Activated CD4-positive, alpha-beta T cell treated with anti-CD3 and anti-CD28 coated beads, Interleukin-2, amount 10 ng/mL, durations not matched to agents 7 days and 5 days (primary cell): ENCODE measurements at regions of chr12 and their contacts with region 1.

Region 1: GRCh38 chr12:94101738-94102660 is 46.4 kb upstream of the PLXNC1 start:
- DNase-seq: peak; percentile 91
- H3K4me3 Mint-ChIP-seq: peak overlapping the region; percentile 78
- H3K27ac Mint-ChIP-seq: peak overlapping the region; percentile 91
- H3K4me1 Mint-ChIP-seq: peaks cover 38% of the 10 kb centered on the region
- H3K27me3 Mint-ChIP-seq: peaks cover 12% of the 10 kb centered on the region

Region 2: DNA sequence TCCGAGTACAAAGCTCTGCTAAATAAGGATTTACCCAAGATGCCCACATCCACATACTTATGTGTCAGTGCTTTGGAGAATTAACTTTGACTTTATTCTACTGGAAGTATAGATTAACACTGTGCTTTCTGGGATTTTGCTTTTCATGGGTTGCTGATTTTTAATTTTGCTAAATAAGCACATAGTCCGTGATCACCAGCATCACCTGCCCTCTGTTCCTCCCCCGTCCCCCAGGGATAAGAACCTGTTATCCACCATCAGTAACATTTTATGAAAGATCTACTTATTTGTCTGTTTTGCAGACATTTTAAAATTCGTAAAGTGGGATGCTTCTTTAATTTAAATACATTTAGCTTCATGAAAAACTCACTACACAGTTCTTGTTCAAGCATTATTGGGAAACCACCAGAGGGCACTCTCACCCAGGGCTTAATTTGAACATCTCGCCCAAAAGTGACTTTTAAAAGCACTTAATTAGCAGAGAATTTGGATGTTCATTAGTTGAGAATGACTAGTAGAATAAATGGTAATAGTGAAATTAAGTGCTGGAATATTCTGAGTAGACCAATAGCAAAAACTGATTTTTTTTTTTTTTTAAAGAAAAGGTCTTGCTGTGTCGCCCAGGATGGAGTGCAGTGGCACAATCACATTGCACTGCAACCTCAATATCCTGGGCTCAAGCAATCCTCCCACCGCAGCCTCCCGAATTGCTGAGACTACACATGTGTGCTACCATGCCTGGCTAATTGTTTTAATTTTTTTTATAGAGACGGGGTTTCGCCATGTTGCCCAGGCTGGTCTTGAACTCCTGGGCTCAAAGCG is 599.0 kb before region 1 on chr12:
- CTCF ChIA-PET with region 1: interaction called, 61 read pairs
- POLR2A ChIA-PET with region 1: interaction called, 6 read pairs
- DNase-seq: peak; percentile 77
- H3K4me3 Mint-ChIP-seq: no peak overlapping the region
- H3K27ac Mint-ChIP-seq: no peak overlapping the region
- H3K4me1 Mint-ChIP-seq: peaks cover 24% of the 10 kb centered on the region
- H3K27me3 Mint-ChIP-seq: no peaks in the 10 kb centered on the region

Region 3: GRCh38 chr12:93526786-93527428 is 575.1 kb before region 1 on chr12:
- CTCF ChIA-PET with region 1: interaction called, 11 read pairs
- POLR2A ChIA-PET with region 1: no interaction called
- DNase-seq: no peak
- H3K4me3 Mint-ChIP-seq: no peak overlapping the region
- H3K27ac Mint-ChIP-seq: no peak overlapping the region
- H3K4me1 Mint-ChIP-seq: peaks cover 13% of the 10 kb centered on the region
- H3K27me3 Mint-ChIP-seq: peaks cover 19% of the 10 kb centered on the region

Region 4: GRCh38 chr12:93569656-93570551 is 532.1 kb before region 1 on chr12:
- CTCF ChIA-PET with region 1: interaction called, 13 read pairs
- POLR2A ChIA-PET with region 1: no interaction called
- DNase-seq: peak; percentile 79
- H3K4me3 Mint-ChIP-seq: peak overlapping the region; percentile 88
- H3K27ac Mint-ChIP-seq: peak overlapping the region; percentile 92
- H3K4me1 Mint-ChIP-seq: peaks cover 30% of the 10 kb centered on the region
- H3K27me3 Mint-ChIP-seq: peaks cover 16% of the 10 kb centered on the region

Region 5: GRCh38 chr12:93766796-93767523 is 335.0 kb before region 1 on chr12:
- CTCF ChIA-PET with region 1: interaction called, 37 read pairs
- POLR2A ChIA-PET with region 1: no interaction called
- DNase-seq: peak; percentile 70
- H3K4me3 Mint-ChIP-seq: peak overlapping the region; percentile 1
- H3K27ac Mint-ChIP-seq: peak overlapping the region; percentile 75
- H3K4me1 Mint-ChIP-seq: peaks cover 42% of the 10 kb centered on the region
- H3K27me3 Mint-ChIP-seq: no peaks in the 10 kb centered on the region

Region 6: GRCh38 chr12:93773122-93773871 is 328.7 kb before region 1 on chr12:
- CTCF ChIA-PET with region 1: interaction called, 16 read pairs
- POLR2A ChIA-PET with region 1: no interaction called
- DNase-seq: no peak
- H3K4me3 Mint-ChIP-seq: no peak overlapping the region
- H3K27ac Mint-ChIP-seq: no peak overlapping the region
- H3K4me1 Mint-ChIP-seq: peaks cover 27% of the 10 kb centered on the region
- H3K27me3 Mint-ChIP-seq: no peaks in the 10 kb centered on the region

Region 7: GRCh38 chr12:94112132-94112531 is 10.1 kb after region 1 on chr12:
- CTCF ChIA-PET with region 1: interaction called, 28 read pairs
- POLR2A ChIA-PET with region 1: no interaction called
- DNase-seq: no peak
- H3K4me3 Mint-ChIP-seq: no peak overlapping the region
- H3K27ac Mint-ChIP-seq: no peak overlapping the region
- H3K4me1 Mint-ChIP-seq: peaks cover 6% of the 10 kb centered on the region
- H3K27me3 Mint-ChIP-seq: peaks cover 6% of the 10 kb centered on the region

Region 8: GRCh38 chr12:94133964-94134795 is 32.2 kb after region 1 on chr12:
- CTCF ChIA-PET with region 1: no interaction called
- POLR2A ChIA-PET with region 1: no interaction called
- DNase-seq: peak; percentile 57
- H3K4me3 Mint-ChIP-seq: no peak overlapping the region
- H3K27ac Mint-ChIP-seq: no peak overlapping the region
- H3K4me1 Mint-ChIP-seq: peaks cover 10% of the 10 kb centered on the region
- H3K27me3 Mint-ChIP-seq: peaks cover 11% of the 10 kb centered on the region